ENCODE measurements at regions of chr22 and their contacts with region 1.

Region 1: GRCh38 chr22:45318168-45318557 is 8.4 kb downstream of the FAM118A start:
- DNase-seq: peak; percentile 72 to 98 (median 96)
- ATAC-seq: peak; percentile 79
- H3K4me3 ChIP-seq: peak overlapping the region; percentile 49
- H3K4me3 Mint-ChIP-seq: peak overlapping the region; percentile 72 to 88 (median 85)
- H3K27ac ChIP-seq: peak overlapping the region; percentile 92
- H3K27ac Mint-ChIP-seq: peak overlapping the region; percentile 98 to 100 (median 99)
- H3K4me1 ChIP-seq: peaks cover 32 to 59% of the 10 kb centered on the region in 2 donors
- H3K4me1 Mint-ChIP-seq: peaks cover 32 to 100% (median 90%) of the 10 kb centered on the region in 7 donors
- H3K27me3 ChIP-seq: no peaks in the 10 kb centered on the region
- H3K27me3 Mint-ChIP-seq: no peaks in the 10 kb centered on the region

Region 2: GRCh38 chr22:44701824-44702478 is 616.2 kb before region 1 on chr22 and contains the start of gene PRR5:
- CTCF ChIA-PET with region 1: no interaction called
- POLR2A ChIA-PET with region 1: no interaction called
- intact Hi-C with region 1: loop called in 1 of 2 experiments (anchors 5 kb)
- DNase-seq: peak; percentile 73 to 85 (median 81)
- ATAC-seq: peak; percentile 94
- H3K4me3 ChIP-seq: peak within 1 kb of the TSS; percentile 64
- H3K4me3 Mint-ChIP-seq: peak within 1 kb of the TSS; percentile 72 to 83 (median 78)
- H3K27ac ChIP-seq: peak within 1 kb of the TSS; percentile 68
- H3K27ac Mint-ChIP-seq: peak within 1 kb of the TSS; percentile 74 to 91 (median 83)
- H3K4me1 ChIP-seq: peaks cover 21 to 23% of the 10 kb centered on the region in 2 donors
- H3K4me1 Mint-ChIP-seq: peaks cover 5 to 31% (median 17%) of the 10 kb centered on the region in 7 donors
- H3K27me3 ChIP-seq: no peaks in the 10 kb centered on the region
- H3K27me3 Mint-ChIP-seq: peaks cover 0 to 9% (median 0%) of the 10 kb centered on the region in 5 donors
- total RNA-seq, gene PRR5: 19.6 to 49.1 (median 44.4) TPM

Region 3: GRCh38 chr22:45149671-45150070 is 168.5 kb before region 1 on chr22:
- CTCF ChIA-PET with region 1: no interaction called
- POLR2A ChIA-PET with region 1: no interaction called
- intact Hi-C with region 1: no loop called
- DNase-seq: no peak
- ATAC-seq: no peak
- H3K4me3 ChIP-seq: no peak overlapping the region
- H3K4me3 Mint-ChIP-seq: no peak overlapping the region
- H3K27ac ChIP-seq: no peak overlapping the region
- H3K27ac Mint-ChIP-seq: no peak overlapping the region
- H3K4me1 ChIP-seq: no peaks in the 10 kb centered on the region
- H3K4me1 Mint-ChIP-seq: peaks cover 5 to 16% (median 8%) of the 10 kb centered on the region in 7 donors
- H3K27me3 ChIP-seq: no peaks in the 10 kb centered on the region
- H3K27me3 Mint-ChIP-seq: no peaks in the 10 kb centered on the region

Region 4: GRCh38 chr22:45179276-45180044 is 138.7 kb before region 1 on chr22:
- CTCF ChIA-PET with region 1: no interaction called
- POLR2A ChIA-PET with region 1: no interaction called
- intact Hi-C with region 1: loop called in 1 of 2 experiments (anchors 5 kb)
- DNase-seq: peak in 7 of 9 donors; percentile 34 to 83 (median 70)
- ATAC-seq: peak; percentile 96
- H3K4me3 ChIP-seq: no peak overlapping the region
- H3K4me3 Mint-ChIP-seq: peak overlapping the region; percentile 19 to 71 (median 55)
- H3K27ac ChIP-seq: peak overlapping the region; percentile 58
- H3K27ac Mint-ChIP-seq: peak overlapping the region; percentile 71 to 97 (median 93)
- H3K4me1 ChIP-seq: peaks cover 6 to 42% of the 10 kb centered on the region in 2 donors
- H3K4me1 Mint-ChIP-seq: peaks cover 31 to 73% (median 66%) of the 10 kb centered on the region in 7 donors
- H3K27me3 ChIP-seq: no peaks in the 10 kb centered on the region
- H3K27me3 Mint-ChIP-seq: no peaks in the 10 kb centered on the region

Region 5: DNA sequence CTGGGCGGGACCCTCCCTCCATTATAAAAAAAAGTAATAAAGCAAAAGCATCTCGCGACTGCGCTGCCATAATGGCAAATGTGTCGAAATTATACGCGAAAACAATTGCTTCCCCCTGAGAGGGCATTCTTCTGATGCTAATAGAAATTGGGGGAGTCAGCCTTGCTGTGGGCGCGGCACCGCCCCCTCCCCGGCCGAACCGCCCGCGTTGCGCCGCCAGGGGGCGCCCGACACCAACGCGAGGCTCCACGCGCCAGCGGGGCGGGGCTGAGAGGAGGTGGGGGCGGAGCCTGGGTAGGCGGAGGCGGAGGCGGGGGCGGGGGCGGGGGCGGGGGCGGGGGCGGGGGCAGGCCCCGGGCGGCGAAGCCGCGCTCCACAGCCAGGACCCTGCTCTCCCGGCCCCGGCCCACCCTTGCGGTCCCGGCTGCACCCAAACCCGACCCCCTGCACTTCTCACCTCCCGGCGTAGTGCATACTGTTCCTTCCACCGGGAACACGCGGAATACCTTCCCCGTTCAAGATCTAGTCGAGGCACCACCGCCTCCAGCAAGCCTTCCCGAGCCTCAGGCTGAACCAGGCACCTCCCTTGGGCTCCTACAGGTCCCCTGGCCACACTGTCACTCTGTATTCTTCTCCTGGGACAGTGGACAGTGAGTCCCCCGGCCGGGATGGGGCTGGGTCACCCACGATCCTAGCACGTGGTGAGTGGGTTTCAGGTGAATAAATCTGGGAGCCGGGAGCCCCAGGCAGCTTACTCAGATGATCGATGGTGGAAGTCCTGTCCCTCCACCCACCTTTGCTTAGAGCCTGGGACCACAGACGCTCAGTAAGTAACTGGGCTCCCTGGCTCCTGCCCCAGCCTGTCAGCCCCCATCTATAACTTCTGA is 49.0 kb before region 1 on chr22:
- CTCF ChIA-PET with region 1: no interaction called
- POLR2A ChIA-PET with region 1: no interaction called
- intact Hi-C with region 1: loop called in 1 of 2 experiments (anchors 1 kb)
- DNase-seq: peak; percentile 82 to 99 (median 90)
- ATAC-seq: peak; percentile 100
- H3K4me3 ChIP-seq: peak overlapping the region; percentile 85
- H3K4me3 Mint-ChIP-seq: peak overlapping the region; percentile 71 to 86 (median 84)
- H3K27ac ChIP-seq: peak overlapping the region; percentile 28
- H3K27ac Mint-ChIP-seq: peak overlapping the region; percentile 43 to 85 (median 72)
- H3K4me1 ChIP-seq: peaks cover 4% of the 10 kb centered on the region in 2 donors
- H3K4me1 Mint-ChIP-seq: peaks cover 4 to 11% (median 8%) of the 10 kb centered on the region in 7 donors
- H3K27me3 ChIP-seq: no peaks in the 10 kb centered on the region
- H3K27me3 Mint-ChIP-seq: peaks cover 0 to 55% (median 0%) of the 10 kb centered on the region in 5 donors

Region 6: DNA sequence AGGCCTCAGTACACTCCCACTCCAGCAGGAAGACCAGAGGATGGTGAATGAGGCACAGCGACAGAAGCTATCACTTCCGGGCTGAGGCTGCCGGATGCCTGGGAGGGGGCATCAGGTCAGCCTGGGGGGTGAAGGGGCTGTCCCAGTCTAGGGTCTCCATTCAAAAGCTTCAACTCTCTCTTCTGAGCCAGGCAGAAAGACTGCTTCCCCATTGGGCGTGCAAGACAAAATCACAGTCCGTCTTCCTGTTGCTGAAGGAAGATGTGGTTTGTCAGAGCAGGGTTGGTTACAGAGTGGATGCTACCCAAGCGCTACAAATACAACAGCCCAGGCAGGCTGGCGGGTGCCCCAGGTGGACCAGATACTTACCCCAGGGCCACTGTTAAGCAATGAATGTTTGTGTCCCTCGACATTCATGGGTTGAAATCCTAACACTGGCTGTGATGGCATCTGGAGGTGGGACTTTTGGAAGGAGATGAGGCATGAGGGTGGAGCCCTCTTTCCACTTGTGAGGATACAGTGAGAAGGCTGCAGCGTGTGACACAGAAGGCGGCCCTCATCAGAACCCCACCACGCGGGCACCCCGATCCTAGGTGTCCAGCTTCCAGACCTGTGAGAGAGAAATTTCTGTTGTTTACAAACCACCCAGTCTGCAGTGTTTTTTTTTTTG is 21.4 kb before region 1 on chr22:
- CTCF ChIA-PET with region 1: interaction called, 4 read pairs
- POLR2A ChIA-PET with region 1: interaction called, 73 read pairs
- intact Hi-C with region 1: loop called in 1 of 2 experiments (anchors 1 kb)
- DNase-seq: peak in 7 of 9 donors; percentile 49 to 77 (median 71)
- ATAC-seq: peak; percentile 92
- H3K4me3 ChIP-seq: peak overlapping the region; percentile 3
- H3K4me3 Mint-ChIP-seq: peak overlapping the region; percentile 47 to 82 (median 66)
- H3K27ac ChIP-seq: peak overlapping the region; percentile 72
- H3K27ac Mint-ChIP-seq: peak overlapping the region; percentile 80 to 97 (median 92)
- H3K4me1 ChIP-seq: peaks cover 9 to 20% of the 10 kb centered on the region in 2 donors
- H3K4me1 Mint-ChIP-seq: peaks cover 12 to 43% (median 25%) of the 10 kb centered on the region in 7 donors
- H3K27me3 ChIP-seq: no peaks in the 10 kb centered on the region
- H3K27me3 Mint-ChIP-seq: no peaks in the 10 kb centered on the region

Region 7: GRCh38 chr22:45344334-45344733 is 26.2 kb after region 1 on chr22:
- CTCF ChIA-PET with region 1: no interaction called
- POLR2A ChIA-PET with region 1: interaction called, 13 read pairs
- intact Hi-C with region 1: loop called (anchors 1 to 2 kb)
- DNase-seq: no peak
- ATAC-seq: no peak
- H3K4me3 ChIP-seq: no peak overlapping the region
- H3K4me3 Mint-ChIP-seq: no peak overlapping the region
- H3K27ac ChIP-seq: no peak overlapping the region
- H3K27ac Mint-ChIP-seq: peak overlapping the region in 8 of 9 donors; percentile 36 to 90 (median 76)
- H3K4me1 ChIP-seq: peaks cover 0 to 24% of the 10 kb centered on the region in 2 donors
- H3K4me1 Mint-ChIP-seq: peaks cover 5 to 42% (median 26%) of the 10 kb centered on the region in 7 donors
- H3K27me3 ChIP-seq: no peaks in the 10 kb centered on the region
- H3K27me3 Mint-ChIP-seq: no peaks in the 10 kb centered on the region

Region 8: GRCh38 chr22:45435544-45436139 is 117.5 kb after region 1 on chr22:
- CTCF ChIA-PET with region 1: interaction called, 3 read pairs
- POLR2A ChIA-PET with region 1: no interaction called
- intact Hi-C with region 1: loop called in 1 of 2 experiments (anchors 2 kb)
- DNase-seq: peak; percentile 60 to 79 (median 73)
- ATAC-seq: peak; percentile 93
- H3K4me3 ChIP-seq: no peak overlapping the region
- H3K4me3 Mint-ChIP-seq: peak overlapping the region in 5 of 10 donors; percentile 12 to 65 (median 32)
- H3K27ac ChIP-seq: no peak overlapping the region
- H3K27ac Mint-ChIP-seq: peak overlapping the region in 6 of 9 donors; percentile 31 to 71 (median 60)
- H3K4me1 ChIP-seq: peaks cover 2 to 6% of the 10 kb centered on the region in 2 donors
- H3K4me1 Mint-ChIP-seq: peaks cover 9 to 22% (median 13%) of the 10 kb centered on the region in 7 donors
- H3K27me3 ChIP-seq: no peaks in the 10 kb centered on the region
- H3K27me3 Mint-ChIP-seq: peaks cover 0 to 7% (median 0%) of the 10 kb centered on the region in 5 donors